H1 (cell line): ENCODE measurements at regions of chr3 and their contacts with region 1.

Region 1: DNA sequence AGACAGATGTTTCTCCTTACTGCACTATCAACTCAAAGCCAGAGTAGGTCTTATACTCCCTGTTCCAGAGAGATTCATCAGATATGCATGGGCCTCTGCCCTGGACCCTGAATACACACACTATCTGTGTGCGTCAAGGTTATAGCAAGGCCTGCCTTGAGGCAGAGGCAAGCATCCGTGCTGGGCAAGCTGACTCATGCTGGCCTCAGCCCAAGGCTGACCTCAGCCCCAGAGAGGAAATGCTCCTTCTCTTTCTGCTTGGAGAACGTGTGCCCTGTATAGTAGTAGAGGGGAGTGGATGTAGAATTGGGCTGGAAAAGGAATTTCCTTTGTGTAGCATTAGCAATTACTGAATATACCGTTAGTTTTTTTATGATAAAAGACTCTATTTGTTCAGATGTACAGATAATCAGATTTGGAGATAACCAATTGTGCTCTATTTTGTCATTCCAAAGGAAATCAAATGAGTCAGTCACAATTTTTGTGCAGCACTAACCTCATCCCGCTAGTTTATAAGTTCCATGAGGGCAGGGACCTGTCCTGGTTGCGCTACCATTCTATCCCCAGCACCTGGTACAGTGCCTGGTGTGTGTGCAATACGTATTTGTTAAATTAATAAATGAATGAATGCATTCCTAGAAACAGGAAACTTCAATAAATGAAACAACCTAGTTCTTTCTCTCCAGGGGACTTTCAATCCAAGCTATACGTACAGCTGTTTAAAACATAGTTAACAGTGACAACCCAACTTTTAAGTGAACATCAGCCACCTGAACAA is 13.3 kb upstream of the PAQR9 start:
- DNase-seq: no peak
- H3K4me3 ChIP-seq: no peak overlapping the region
- H3K27ac ChIP-seq: no peak overlapping the region
- H3K4me1 ChIP-seq: no peaks in the 10 kb centered on the region
- H3K27me3 ChIP-seq: no peaks in the 10 kb centered on the region
- CTCF ChIP-seq: no peak
- EP300 ChIP-seq: no peak
- POLR2A ChIP-seq: no peak
- RAD21 ChIP-seq: no peak

Region 2: GRCh38 chr3:142904639-142905436 is 72.0 kb before region 1 on chr3:
- CTCF ChIA-PET with region 1: interaction called, 11 read pairs
- POLR2A ChIA-PET with region 1: interaction called, 3 read pairs
- DNase-seq: peak in 1 of 2 experiments; percentile 50
- H3K4me3 ChIP-seq: no peak overlapping the region
- H3K27ac ChIP-seq: no peak overlapping the region
- H3K4me1 ChIP-seq: no peaks in the 10 kb centered on the region
- H3K27me3 ChIP-seq: no peaks in the 10 kb centered on the region
- CTCF ChIP-seq: peak in 2 of 3 experiments; percentile 73 to 75; a peak in 3 of 4 replicates
- EP300 ChIP-seq: no peak
- POLR2A ChIP-seq: no peak
- RAD21 ChIP-seq: peak; percentile 92

Region 3: DNA sequence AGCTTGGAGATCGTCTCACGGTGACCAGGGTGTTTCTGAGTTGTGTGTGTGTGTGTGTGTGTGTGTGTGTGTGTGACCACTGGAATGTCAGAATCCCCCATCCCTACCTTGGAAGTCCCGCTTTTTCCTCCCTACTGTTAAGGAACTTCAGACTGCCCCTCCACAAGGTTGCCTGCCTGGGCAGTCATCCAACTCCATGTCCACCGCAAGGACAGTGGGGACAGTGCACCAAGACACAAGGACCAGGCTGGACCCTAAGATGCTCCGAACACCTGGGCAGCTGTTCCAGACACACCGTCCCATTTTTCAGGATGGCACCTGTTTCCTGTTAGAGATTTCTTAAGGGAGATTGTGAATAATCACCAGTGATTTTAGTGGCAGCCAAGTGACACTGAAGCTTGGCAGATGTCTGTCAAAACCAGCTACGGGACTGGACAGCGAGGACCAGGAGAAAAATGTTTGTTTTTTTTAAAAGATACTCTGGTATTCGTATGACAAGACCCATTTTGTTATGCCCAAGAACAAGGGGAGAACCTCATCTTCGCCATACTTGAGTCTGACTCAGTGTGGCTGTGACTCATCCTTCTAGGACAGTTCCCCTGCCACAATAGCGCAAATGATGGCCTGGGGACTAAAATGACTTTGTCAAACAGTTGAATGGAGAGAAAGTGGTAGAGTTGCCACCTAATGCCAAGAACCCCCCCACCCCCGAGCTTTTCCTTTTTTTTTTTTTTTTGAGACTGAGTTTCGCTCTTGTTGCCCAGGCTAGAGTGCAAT is 28.8 kb before region 1 on chr3:
- CTCF ChIA-PET with region 1: interaction called, 10 read pairs
- POLR2A ChIA-PET with region 1: no interaction called
- DNase-seq: no peak
- H3K4me3 ChIP-seq: peak overlapping the region in 1 of 4 experiments; percentile 9; a peak in 1 of 8 replicates
- H3K27ac ChIP-seq: no peak overlapping the region
- H3K4me1 ChIP-seq: peaks cover 0 to 3% (median 1%) of the 10 kb centered on the region in 4 experiments; a peak in 1 of 7 replicates
- H3K27me3 ChIP-seq: no peaks in the 10 kb centered on the region
- CTCF ChIP-seq: no peak
- EP300 ChIP-seq: no peak
- POLR2A ChIP-seq: no peak
- RAD21 ChIP-seq: no peak

Region 4: GRCh38 chr3:142987080-142987700 is 10.4 kb after region 1 on chr3:
- CTCF ChIA-PET with region 1: interaction called, 32 read pairs
- POLR2A ChIA-PET with region 1: no interaction called
- DNase-seq: no peak
- H3K4me3 ChIP-seq: no peak overlapping the region
- H3K27ac ChIP-seq: no peak overlapping the region
- H3K4me1 ChIP-seq: peaks cover 0 to 3% (median under 1%) of the 10 kb centered on the region in 4 experiments; a peak in 3 of 7 replicates
- H3K27me3 ChIP-seq: no peaks in the 10 kb centered on the region
- CTCF ChIP-seq: peak in 2 of 3 experiments; percentile 38 to 53; a peak in 2 of 4 replicates
- EP300 ChIP-seq: no peak
- POLR2A ChIP-seq: no peak
- RAD21 ChIP-seq: peak in 1 of 2 experiments; percentile 43; a peak in 3 of 4 replicates

Region 5: DNA sequence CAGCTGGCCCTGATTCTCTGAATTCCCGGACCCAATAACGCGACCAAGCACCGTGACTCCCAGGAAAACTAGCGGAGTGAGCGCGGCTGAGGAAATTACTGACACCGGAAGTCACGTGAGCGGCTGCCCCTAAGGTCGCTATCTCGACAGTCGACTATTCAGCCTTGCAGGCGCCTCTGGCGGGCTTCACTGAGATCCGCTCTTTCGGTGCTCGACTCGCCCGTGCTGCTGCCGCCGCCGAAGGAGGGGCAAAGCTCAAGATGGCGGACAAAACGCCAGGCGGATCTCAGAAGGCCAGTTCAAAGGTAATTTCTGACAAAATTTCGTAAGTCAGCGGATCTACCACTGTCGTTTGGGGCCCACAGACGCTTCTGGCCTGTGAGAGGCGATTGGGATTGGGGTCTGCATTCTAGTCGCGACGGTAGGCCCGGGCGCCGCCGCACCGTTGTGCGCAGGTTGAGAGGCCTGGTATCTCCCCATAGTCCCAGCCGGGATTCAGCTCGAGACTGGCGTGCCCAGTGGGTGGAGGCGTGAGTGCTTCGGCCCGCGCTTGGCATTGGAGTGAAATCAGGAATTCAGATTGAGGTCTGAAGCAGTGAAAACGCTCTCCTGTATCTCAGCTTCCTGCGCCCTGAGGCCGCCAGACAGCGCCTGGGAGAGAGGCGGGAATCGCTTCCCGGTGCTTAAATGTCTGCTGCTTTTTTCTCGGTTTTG is 24.7 kb after region 1 on chr3 and contains the start of gene U2SURP:
- CTCF ChIA-PET with region 1: interaction called, 8 read pairs
- POLR2A ChIA-PET with region 1: interaction called, 15 read pairs
- DNase-seq: peak; percentile 86
- H3K4me3 ChIP-seq: peak within 1 kb of the TSS; percentile 81 to 99 (median 90)
- H3K27ac ChIP-seq: peak within 1 kb of the TSS; percentile 89
- H3K4me1 ChIP-seq: peaks cover 0 to 4% (median 2%) of the 10 kb centered on the region in 4 experiments; a peak in 2 of 7 replicates
- H3K27me3 ChIP-seq: no peaks in the 10 kb centered on the region
- CTCF ChIP-seq: no peak
- EP300 ChIP-seq: peak in 1 of 2 experiments; percentile 83; a peak in 1 of 3 replicates
- POLR2A ChIP-seq: peak; percentile 86 to 92
- RAD21 ChIP-seq: no peak
- total RNA-seq, gene U2SURP: 160 and 167 TPM in 2 replicates